Endothelial cell of umbilical vein (primary cell): ENCODE measurements at regions of chr13 and their contacts with region 1.

Region 1: DNA sequence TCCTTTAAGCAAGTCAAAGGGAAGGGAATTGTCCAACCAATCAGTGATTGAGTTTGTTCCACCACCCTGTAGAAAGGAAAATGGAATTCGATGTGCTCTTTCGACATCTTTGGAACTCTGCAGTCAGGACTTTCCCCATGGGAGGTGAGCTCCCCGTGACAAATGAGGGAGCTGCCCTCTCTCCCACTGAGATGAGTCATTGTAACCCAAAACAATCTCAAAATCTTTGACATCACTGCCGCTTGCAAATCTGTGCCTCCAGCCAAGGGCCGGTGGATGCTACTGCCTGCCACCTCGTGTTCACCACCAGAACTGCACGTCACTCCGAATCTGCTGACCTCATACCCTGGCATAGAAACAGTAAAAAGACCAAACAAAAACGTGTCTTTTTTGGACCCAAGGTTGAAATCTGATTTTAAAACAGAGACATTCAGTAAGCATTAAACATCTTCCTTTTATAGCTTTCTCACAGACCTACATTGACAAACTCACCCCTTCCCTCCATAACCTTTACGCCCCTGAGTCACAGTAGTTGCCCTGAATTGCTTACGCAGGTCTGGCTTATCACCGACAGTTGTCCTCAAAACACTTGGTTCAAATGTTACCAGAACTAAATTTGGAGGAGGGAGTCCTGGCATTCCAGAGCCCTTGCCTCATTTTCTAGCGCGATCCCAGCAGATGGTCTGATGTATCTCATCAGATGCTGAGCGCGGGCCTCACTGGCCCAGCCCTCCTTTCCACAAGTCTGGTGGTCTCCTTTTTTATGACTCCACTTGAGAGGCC is 105.2 kb downstream of the COL4A2 start:
- DNase-seq: peak; percentile 93
- H3K4me3 ChIP-seq: no peak overlapping the region
- H3K27ac ChIP-seq: peak overlapping the region; percentile 97
- H3K4me1 ChIP-seq: peaks cover 53% of the 10 kb centered on the region
- H3K27me3 ChIP-seq: no peaks in the 10 kb centered on the region
- CTCF ChIP-seq: peak; percentile 88
- POLR2A ChIP-seq: no peak

Region 2: DNA sequence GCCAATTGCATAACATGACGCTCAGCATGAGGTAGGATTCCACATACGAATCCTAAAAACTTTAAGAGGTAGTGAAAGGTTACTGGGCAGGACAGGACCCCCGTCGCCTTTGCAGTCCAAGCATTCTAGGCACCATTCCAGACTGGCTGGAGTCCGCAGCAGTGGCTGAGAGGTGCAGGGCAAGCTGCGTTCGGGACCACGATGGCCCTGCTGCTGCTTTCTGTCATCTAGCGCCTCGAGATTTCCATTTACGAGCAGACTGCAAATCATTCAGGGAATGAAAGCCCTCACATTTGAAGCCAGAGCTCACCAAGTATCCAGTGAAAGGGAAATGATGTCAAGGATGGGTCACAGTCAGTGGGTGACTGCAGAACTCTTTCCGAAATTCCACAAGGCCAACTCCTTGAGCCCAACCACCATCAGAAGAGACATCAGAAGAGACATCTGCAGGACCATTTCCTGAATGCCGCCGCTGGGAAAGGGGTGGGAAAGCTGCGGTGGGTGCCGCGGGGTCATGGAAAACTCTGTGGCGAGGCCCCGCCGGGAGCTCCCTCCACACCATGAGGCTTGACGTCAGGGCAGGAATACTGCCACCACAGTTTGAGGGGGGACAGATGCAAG is 193.6 kb before region 1 on chr13:
- CTCF ChIA-PET with region 1: interaction called, 28 read pairs
- POLR2A ChIA-PET with region 1: no interaction called
- dilution Hi-C with region 1: no loop called
- intact Hi-C with region 1: loop called (anchors 1 kb)
- DNase-seq: no peak
- H3K4me3 ChIP-seq: no peak overlapping the region
- H3K27ac ChIP-seq: no peak overlapping the region
- H3K4me1 ChIP-seq: peaks cover 18% of the 10 kb centered on the region
- H3K27me3 ChIP-seq: no peaks in the 10 kb centered on the region
- CTCF ChIP-seq: no peak
- POLR2A ChIP-seq: no peak

Region 3: DNA sequence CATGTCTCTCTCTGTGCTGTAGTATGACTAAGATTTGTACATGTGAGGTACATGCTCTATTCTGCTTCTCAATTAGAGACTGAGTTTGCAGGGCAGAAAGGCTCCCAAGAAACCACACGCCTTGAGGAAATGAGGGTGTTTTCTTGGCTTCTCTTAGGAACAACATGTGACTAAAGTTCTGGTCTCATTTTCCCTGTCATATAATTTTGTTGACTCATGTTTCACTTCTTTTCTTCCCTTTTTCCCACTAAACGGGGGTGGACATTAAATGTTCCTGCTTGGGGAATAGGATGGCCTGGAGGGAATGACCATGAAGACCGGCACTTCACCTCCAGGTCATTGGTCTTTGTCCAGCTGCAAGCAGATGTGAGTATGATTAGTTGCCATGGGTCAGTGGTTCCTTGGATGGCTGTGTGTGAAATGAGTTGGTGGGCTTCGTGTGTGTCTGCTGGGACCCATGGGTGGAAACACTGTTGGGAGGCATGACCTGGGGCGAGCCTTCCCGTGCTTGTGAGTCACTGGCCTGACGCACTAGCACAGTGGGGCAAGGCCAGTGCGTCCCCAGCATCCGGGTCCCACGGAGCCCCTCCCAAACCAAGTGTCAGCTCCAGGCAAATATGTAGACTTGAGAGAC is 161.9 kb before region 1 on chr13:
- CTCF ChIA-PET with region 1: interaction called, 38 read pairs
- POLR2A ChIA-PET with region 1: no interaction called
- dilution Hi-C with region 1: no loop called
- intact Hi-C with region 1: no loop called
- DNase-seq: peak; percentile 64
- H3K4me3 ChIP-seq: no peak overlapping the region
- H3K27ac ChIP-seq: peak overlapping the region; percentile 77
- H3K4me1 ChIP-seq: peaks cover 38% of the 10 kb centered on the region
- H3K27me3 ChIP-seq: no peaks in the 10 kb centered on the region
- CTCF ChIP-seq: no peak
- POLR2A ChIP-seq: no peak

Region 4: DNA sequence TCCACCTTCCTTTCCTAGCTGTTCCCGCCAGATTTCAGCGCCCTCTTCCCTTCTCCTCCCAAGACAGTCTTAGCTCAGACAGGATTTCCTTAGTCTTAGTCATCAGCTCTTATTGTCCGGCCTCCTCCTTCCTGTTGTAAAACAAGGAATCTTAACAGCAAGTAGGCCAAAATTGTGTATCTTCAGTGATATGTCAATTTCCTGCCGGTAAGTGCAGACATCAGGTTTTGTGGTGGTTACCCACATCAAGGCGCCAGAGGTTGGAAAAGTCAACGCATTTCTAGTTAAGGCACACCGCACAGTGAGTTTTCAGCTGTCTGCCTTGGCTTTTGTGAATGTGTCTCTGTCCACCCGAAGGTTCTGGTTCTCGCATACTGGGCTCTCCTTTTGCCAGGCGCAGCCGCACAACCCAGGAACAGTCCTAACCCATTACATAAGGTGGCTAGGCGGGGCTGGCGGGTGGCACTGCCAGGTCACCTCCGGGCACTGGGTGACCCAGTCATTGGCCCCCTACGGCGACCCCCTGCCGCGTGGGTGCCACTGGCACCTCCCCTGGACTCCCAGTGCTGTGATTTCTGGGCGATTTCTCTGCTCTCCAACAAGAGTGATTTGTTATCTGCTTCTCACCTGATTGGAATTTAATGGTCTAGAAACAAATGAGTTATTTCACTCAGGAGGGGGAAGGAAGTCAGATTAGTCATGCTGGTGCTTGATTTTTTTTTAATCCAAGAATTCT is 92.4 kb before region 1 on chr13:
- CTCF ChIA-PET with region 1: interaction called, 4 read pairs
- POLR2A ChIA-PET with region 1: no interaction called
- dilution Hi-C with region 1: no loop called
- intact Hi-C with region 1: loop called (anchors 1 kb)
- DNase-seq: peak; percentile 87
- H3K4me3 ChIP-seq: peak overlapping the region in 1 of 3 experiments; percentile 30
- H3K27ac ChIP-seq: peak overlapping the region; percentile 97
- H3K4me1 ChIP-seq: peaks cover 36% of the 10 kb centered on the region
- H3K27me3 ChIP-seq: no peaks in the 10 kb centered on the region
- CTCF ChIP-seq: no peak
- POLR2A ChIP-seq: no peak

Region 5: DNA sequence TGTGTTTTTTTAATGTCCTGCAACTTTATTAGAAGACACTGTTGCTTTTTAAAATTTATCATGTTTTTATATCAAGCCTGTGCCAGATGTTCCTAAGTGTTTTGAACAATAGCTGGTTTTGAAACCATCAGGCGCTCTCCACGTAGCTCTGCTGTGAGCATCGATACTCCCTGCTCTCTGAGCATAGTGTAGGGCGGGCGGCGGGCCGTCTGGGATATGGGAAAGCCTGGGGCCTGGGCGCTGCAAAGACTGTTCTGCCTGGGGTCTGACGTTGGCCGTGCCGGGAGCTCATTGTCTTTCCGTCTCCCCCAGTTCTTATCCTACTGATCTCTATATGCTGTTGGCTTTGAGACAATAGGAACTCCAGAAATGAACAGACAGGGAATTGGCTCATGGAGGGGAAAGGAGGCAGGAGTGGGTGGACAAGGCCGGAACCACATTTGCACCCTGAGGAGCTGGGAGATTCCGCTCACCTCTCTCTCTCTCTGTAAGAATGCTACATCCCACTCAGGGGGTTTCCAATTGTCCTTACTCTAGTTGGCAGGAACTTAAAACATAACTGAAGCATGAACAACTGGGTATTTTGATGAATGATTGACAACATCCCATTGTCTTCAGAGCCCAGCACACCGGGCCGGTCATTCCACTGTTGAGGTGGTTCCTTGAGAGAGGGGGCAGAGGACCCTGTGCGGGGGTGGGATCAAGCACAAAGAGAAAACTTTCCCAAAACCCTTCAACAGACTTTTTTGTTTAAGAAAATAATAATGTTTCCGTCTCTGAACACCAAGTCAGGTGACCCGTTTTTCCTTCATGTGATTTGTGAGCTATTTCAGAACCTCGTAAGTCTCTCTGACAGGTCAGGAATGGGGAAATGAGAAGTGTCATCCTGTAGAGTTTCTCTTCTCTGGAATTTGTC is 40.5 kb before region 1 on chr13:
- CTCF ChIA-PET with region 1: interaction called, 4 read pairs
- POLR2A ChIA-PET with region 1: no interaction called
- dilution Hi-C with region 1: no loop called
- intact Hi-C with region 1: loop called (anchors 1 kb)
- DNase-seq: peak; percentile 81
- H3K4me3 ChIP-seq: no peak overlapping the region
- H3K27ac ChIP-seq: peak overlapping the region; percentile 72
- H3K4me1 ChIP-seq: peaks cover 45% of the 10 kb centered on the region
- H3K27me3 ChIP-seq: no peaks in the 10 kb centered on the region
- CTCF ChIP-seq: no peak
- POLR2A ChIP-seq: no peak

Region 6: DNA sequence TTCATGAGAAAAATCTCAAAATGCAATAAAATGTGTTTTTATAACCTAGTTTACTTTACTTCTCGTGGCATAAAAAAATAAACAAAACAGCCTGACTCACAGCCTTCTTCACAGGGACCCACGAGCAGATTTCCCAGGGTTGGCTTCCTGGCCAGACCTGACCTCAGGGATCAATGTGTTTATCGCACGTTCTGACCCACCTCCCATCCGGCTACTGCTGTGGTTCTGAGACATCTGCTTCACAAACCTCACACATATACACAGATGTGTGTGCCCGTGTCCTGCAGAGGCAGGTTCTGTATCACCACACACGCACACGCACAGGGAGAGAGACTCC is 13.1 kb after region 1 on chr13:
- CTCF ChIA-PET with region 1: interaction called, 5 read pairs
- POLR2A ChIA-PET with region 1: no interaction called
- dilution Hi-C with region 1: no loop called
- intact Hi-C with region 1: loop called (anchors 1 kb)
- DNase-seq: peak; percentile 93
- H3K4me3 ChIP-seq: no peak overlapping the region
- H3K27ac ChIP-seq: peak overlapping the region; percentile 89
- H3K4me1 ChIP-seq: peaks cover 54% of the 10 kb centered on the region
- H3K27me3 ChIP-seq: no peaks in the 10 kb centered on the region
- CTCF ChIP-seq: no peak
- POLR2A ChIP-seq: no peak